Activated CD4-positive, alpha-beta T cell treated with anti-CD3 and anti-CD28 coated beads, Interleukin-2, amount 10 ng/mL, durations not matched to agents 24 days and 14 days (primary cell): ENCODE measurements at regions of chr17 and their contacts with region 1.

Region 1: GRCh38 chr17:16215273-16215964 is at the start of gene NCOR1:
- DNase-seq: peak; percentile 97
- H3K4me3 Mint-ChIP-seq: peak within 1 kb of the TSS; percentile 97
- H3K27ac Mint-ChIP-seq: peak within 1 kb of the TSS; percentile 87
- H3K4me1 Mint-ChIP-seq: peaks cover 37% of the 10 kb centered on the region
- H3K27me3 Mint-ChIP-seq: no peaks in the 10 kb centered on the region
- total RNA-seq, gene NCOR1: 119 and 133 TPM in 2 replicates

Region 2: DNA sequence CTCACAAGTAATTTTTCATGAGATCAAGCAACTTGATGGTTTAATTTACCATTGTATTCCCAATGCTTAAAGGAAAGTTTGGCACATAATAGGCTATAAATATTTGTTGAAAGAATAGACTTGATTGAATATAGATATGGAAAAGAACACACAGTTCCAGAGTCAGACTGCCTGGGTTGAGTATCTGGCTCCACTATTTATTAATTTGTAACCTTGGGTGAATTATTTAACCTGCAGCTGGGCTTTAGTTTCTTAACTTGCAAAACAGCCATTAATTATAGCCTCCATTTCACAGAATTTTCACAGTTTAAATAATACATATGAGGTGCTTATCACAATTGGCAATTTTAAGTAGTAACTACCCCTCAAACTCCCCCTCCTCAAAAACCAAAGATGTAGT is 73.7 kb before region 1 on chr17:
- intact Hi-C with region 1: no loop called
- DNase-seq: no peak
- H3K4me3 Mint-ChIP-seq: no peak overlapping the region
- H3K27ac Mint-ChIP-seq: no peak overlapping the region
- H3K4me1 Mint-ChIP-seq: no peaks in the 10 kb centered on the region
- H3K27me3 Mint-ChIP-seq: no peaks in the 10 kb centered on the region

Region 3: DNA sequence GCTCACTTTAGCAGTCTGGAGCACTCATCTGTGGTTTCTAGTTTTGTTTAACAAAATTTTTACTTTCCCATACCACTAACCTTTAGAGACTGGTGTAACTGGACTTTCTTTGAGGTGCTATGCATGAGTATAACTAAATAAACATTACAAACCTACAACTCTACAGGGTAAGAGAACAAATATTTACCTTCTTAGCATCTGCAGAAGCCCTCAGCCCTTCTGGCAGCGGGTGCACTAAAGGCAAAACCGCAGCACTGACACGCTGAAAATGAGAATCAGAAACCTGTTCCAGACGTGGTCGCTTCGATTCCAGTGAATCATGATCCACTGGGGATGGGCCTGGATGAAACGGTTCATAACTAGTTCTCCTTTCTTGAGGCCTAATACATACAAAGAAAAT is 43.8 kb before region 1 on chr17:
- intact Hi-C with region 1: no loop called
- DNase-seq: no peak
- H3K4me3 Mint-ChIP-seq: no peak overlapping the region
- H3K27ac Mint-ChIP-seq: no peak overlapping the region
- H3K4me1 Mint-ChIP-seq: peaks cover 11% of the 10 kb centered on the region
- H3K27me3 Mint-ChIP-seq: no peaks in the 10 kb centered on the region

Region 4: DNA sequence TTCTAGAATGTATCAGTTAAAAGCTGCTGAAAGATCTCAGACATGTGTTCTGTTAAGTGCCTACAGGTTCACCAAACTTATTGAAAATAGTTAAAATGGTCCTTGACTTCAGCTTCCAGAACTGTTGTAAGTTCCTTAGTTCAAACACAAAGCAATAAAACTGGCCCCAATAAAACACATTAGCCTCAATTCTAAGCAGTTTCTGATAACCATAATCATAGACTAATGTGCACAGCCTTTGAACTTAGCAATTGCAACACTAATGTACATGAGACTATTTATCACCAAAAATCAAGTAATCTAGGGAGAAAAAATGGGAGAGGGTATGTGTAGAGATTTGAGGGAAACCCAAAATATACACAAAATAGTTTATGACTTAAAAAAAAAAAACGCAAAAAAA is 17.0 kb after region 1 on chr17:
- intact Hi-C with region 1: loop called (anchors 1 kb)
- DNase-seq: no peak
- H3K4me3 Mint-ChIP-seq: no peak overlapping the region
- H3K27ac Mint-ChIP-seq: no peak overlapping the region
- H3K4me1 Mint-ChIP-seq: peaks cover 15% of the 10 kb centered on the region
- H3K27me3 Mint-ChIP-seq: no peaks in the 10 kb centered on the region

Region 5: GRCh38 chr17:16353317-16354174 is 138.1 kb after region 1 on chr17 and contains the start of gene CENPV:
- intact Hi-C with region 1: loop called (anchors 5 kb)
- DNase-seq: peak; percentile 89
- H3K4me3 Mint-ChIP-seq: peak within 1 kb of the TSS; percentile 88
- H3K27ac Mint-ChIP-seq: peak within 1 kb of the TSS; percentile 84
- H3K4me1 Mint-ChIP-seq: peaks cover 14% of the 10 kb centered on the region
- H3K27me3 Mint-ChIP-seq: peaks cover 19% of the 10 kb centered on the region
- total RNA-seq, gene CENPV: 52.8 and 53.0 TPM in 2 replicates

Region 6: DNA sequence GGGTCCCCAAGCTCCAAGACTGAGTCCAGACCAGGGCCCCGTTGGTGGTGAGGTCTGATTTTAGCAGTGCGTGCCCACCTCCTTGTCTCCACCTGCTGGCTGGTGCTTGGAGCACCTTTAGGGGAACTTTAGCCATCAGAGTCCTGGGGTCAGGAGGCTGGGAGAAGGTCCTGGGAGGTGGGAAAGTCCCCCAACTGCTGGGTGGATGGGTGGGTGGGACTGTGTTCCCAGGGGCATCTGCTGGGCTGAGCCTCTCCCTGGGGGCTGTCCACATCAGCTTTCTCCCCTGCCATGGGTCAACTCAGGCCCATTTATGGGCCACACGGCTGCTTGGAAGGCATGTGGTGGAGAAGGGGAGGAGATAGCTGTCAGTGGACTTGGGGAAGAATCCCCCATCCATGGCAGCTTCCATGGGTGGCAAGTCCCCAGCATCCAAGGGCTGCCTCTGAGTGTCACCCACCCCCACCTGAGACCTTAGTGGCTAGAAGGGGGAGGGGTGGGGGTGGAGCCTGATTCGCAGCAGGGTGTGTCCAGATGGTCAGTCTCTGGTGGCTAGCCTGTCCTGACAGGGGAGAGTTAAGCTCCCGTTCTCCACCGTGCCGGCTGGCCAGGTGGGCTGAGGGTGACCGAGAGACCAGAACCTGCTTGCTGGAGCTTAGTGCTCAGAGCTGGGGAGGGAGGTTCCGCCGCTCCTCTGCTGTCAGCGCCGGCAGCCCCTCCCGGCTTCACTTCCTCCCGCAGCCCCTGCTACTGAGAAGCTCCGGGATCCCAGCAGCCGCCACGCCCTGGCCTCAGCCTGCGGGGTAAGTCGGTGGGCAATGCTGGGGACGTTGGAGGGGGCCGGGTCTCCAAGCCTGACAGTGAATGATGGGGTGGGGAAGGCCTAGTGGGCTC is 199.9 kb after region 1 on chr17 and contains the start of gene TRPV2:
- intact Hi-C with region 1: loop called (anchors 10 kb)
- DNase-seq: peak; percentile 83
- H3K4me3 Mint-ChIP-seq: peak within 1 kb of the TSS; percentile 100
- H3K27ac Mint-ChIP-seq: peak within 1 kb of the TSS; percentile 100
- H3K4me1 Mint-ChIP-seq: peaks cover 41% of the 10 kb centered on the region
- H3K27me3 Mint-ChIP-seq: no peaks in the 10 kb centered on the region
- total RNA-seq, gene TRPV2: 29.6 and 38.7 TPM in 2 replicates

Region 7: GRCh38 chr17:16537130-16537458 is 321.7 kb after region 1 on chr17:
- intact Hi-C with region 1: loop called (anchors 1 kb)
- DNase-seq: no peak
- H3K4me3 Mint-ChIP-seq: peak overlapping the region; percentile 99
- H3K27ac Mint-ChIP-seq: no peak overlapping the region
- H3K4me1 Mint-ChIP-seq: peaks cover 14% of the 10 kb centered on the region
- H3K27me3 Mint-ChIP-seq: peaks cover 2% of the 10 kb centered on the region